ENCODE measurements at regions of chr3 and their contacts with region 1.

Region 1: GRCh38 chr3:187164885-187165543 is 25.7 kb upstream of the RPL39L start:
- DNase-seq: no peak

Region 2: GRCh38 chr3:186849374-186849975 is 315.5 kb before region 1 on chr3:
- intact Hi-C with region 1: loop called (anchors 2 kb)
- DNase-seq: no peak

Region 3: DNA sequence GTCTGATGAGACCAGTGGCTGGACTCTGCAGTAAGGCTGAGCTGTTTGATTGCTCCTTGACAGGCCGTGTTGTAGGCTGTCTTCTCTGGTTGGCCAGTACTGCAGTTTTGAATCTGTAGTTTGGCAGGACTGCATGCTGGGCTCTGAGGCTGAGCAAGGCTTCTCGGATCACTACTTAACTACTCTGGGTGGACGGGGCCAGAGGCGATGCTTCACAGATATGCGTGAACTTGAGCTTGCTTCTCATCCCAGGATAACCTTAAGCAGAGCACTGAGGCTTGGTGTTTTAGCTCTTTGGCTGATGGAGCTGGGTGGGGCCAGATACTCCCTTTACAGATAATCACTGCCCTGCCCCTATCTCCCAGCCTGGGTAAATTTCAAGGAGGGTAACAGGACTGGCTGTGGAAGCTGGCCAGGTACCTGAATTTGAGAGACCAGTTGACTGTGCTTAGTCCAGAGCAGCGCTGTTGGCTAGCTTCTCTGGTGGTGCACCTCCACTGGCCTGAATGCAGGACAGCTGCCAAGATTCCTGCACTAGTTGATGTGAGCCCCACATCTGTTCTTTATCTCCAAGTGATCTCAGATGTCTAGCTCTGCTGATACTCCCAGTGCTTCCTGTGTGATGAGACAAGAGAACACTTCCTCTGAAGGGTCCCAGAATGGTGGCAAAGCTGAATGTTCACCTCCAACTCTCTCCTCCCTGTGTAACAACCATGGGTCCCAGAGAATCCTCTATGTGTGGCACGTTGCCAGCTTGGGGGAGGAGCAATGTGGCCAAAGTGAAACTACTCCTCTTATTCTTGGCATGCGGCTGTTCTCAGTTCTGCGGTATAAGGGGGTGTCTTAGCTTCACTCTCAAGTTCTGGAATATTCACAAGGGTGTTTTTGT is 63.6 kb before region 1 on chr3:
- intact Hi-C with region 1: loop called (anchors 5 kb)
- DNase-seq: peak; percentile 84

Region 4: DNA sequence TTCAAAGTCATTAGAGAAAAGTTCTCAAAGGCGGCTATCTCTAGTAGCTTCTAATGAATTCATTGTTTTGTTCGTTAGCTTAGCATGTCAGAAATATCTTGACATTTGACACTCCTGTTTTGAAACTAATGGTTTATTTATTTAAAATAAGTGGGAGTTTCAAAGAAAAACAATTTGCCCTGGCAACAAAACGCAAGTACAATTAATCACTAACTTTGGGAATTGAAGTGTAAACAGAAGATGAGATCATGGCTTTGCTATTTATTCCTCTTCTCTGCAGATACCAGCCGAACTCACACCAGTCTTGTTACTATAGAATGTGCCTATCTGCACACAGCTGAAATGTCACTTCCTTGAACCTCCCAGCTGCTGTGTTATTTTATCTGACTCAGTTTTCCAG is 99.0 kb after region 1 on chr3:
- intact Hi-C with region 1: no loop called
- DNase-seq: no peak